ENCODE measurements at regions of chr14 and their contacts with region 1.

Region 1: GRCh38 chr14:54566410-54567223 is at the start of gene SAMD4A:
- DNase-seq: peak; percentile 61

Region 2: DNA sequence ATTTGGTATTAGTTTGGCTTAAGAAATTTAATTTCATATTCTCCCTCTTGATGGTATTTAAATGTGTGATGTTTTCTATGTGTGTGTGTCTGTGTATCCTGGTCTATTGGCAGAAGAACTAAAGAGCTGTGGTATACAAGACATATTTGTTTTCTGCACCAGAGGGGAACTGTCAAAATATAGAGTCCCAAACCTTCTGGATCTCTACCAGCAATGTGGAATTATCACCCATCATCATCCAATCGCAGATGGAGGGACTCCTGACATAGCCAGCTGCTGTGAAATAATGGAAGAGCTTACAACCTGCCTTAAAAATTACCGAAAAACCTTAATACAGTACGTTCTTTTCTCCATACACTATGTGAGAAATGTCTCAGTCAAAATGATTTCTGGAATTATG is 155.2 kb before region 1 on chr14:
- CTCF ChIA-PET with region 1: no interaction called
- POLR2A ChIA-PET with region 1: no interaction called
- DNase-seq: no peak

Region 3: GRCh38 chr14:54614296-54614695 is 47.7 kb after region 1 on chr14:
- CTCF ChIA-PET with region 1: no interaction called
- POLR2A ChIA-PET with region 1: no interaction called
- DNase-seq: no peak

Region 4: DNA sequence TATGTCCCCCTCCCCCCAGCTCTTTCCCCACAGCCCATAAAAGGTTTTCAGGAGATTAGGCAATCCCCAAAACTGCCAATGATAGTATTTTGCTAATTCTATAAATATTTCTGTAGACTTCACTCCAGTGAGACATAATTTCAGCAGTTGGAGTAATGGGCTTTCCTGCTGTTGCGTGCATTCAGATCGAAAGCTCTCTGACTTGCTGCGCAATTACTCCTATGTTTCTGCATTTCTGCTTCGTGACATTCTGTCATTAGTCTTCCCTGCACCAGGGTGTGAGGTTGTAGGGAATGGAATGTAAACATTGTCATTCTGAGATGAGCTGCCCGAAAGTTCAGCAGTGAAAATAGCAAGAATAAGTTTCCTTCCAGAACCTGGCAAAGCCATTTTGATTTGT is 58.5 kb after region 1 on chr14:
- CTCF ChIA-PET with region 1: no interaction called
- POLR2A ChIA-PET with region 1: interaction called, 11 read pairs
- DNase-seq: no peak

Region 5: GRCh38 chr14:54691525-54692283 is 125.1 kb after region 1 on chr14:
- CTCF ChIA-PET with region 1: interaction called, 5 read pairs
- POLR2A ChIA-PET with region 1: interaction called, 14 read pairs
- DNase-seq: peak; percentile 65

Region 6: DNA sequence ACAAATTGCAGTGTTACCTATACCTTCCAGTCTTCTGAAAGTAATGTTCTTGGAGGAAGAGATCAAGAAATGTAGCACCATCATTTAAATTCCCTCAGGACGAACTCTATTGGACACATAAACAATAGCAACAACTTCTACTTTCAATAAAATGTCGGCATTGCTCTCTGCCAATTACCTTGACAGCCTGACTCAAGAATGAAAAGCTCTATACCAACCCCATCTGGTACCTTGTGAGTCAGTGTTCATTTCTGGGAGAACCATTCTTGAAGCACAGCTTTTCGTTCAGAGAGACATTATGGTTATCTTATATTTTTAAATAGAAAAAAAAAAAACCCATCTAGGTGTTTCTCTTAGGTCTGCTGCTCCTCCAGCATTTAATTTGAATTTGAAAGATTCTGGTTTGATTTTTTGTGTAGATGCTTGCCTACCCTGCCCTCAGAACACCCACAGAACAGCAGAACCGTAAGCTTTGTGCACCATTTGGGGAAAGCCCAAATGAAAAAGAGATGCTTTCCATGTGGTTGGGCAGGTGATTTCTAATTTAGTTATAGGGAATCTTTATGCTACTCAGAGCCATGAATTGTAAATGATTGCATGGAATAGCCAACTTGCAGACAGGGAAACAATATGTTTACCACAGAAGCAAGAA is 156.3 kb after region 1 on chr14:
- CTCF ChIA-PET with region 1: no interaction called
- POLR2A ChIA-PET with region 1: interaction called, 11 read pairs
- DNase-seq: peak; percentile 37

Region 7: DNA sequence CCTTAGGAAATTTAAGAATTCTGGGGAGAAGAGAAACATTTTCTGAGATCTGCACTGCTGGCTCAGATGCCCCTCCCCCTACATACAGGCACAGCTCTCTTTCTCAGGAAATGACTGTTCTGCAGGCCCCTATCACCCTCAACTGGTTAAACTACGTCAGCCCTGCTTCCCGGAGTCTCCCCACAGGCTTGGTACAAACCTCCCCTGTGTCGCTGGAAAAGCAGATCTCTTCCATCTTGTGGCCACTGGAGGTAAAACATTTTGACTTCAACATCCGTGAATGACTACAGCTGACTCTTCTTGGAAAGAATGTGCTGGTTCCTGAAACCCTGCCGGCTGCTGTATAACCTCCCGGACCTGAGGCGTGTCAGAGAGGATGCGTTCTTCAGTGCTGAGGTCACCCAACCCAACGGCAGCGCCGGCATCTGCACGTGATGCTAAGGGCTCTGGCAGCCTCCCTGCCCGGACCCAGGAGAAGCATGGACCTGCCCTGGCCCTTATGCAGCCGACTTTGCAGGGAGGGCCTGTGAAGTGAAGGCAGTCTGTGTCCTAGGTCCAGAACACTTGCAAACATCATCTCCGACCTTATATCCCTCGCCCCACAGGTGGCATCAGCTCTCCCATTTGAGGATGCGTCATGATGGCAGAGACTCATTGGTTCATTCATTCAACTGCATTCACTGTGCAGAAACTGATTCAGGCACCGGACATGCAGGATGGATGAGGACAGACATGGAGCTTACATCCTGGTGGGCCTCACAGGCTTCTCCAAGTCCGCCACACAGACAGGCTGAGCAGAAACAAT is 206.8 kb after region 1 on chr14:
- CTCF ChIA-PET with region 1: interaction called, 30 read pairs
- POLR2A ChIA-PET with region 1: interaction called, 32 read pairs
- DNase-seq: peak; percentile 83